Endothelial cell of umbilical vein (primary cell): ENCODE measurements at regions of chr12 and their contacts with region 1.

Region 1: DNA sequence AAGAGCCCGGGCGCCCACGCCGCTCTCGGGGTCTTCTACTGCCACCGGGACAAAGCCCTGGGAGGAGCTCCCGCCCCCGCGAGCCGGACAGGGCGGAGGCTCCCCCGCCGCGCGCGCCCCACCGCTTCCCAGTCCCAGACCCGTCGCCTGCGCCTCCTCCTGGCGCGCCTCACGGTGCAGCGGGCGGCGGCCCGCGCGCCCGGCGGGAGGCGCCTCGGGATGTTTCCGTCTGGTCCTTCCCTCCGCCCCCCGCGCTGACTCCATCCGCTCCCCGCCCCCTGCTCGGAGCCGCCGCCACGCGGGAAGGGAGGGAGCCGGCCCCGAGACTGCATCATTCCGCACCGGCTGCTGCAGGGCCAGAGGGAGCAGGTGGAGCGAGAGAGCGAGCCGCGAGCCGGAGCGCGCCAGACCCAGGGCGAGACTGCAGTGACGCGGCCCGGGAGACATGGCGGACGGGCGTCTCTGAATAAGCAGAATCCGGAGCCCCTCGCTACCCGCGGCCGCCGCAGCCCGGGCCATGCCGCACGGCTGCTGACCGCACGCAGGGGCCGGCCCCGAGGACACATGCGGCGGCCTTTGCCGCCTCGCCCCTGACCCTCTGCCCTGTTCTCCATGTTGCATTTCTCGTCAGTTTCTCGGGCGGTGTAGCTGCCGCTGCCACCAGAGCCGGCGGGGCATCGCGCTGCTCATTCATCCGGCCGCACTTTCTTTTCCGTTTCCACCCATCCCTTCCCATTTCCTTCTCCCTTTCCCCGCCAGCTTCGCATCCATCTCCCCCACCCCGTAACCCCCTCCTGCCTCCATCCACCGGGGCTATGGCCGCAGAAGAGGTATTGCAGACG is at the start of gene BICD1:
- DNase-seq: peak; percentile 92
- H3K4me3 ChIP-seq: peak within 1 kb of the TSS; percentile 58 to 84 (median 67)
- H3K27ac ChIP-seq: peak within 1 kb of the TSS; percentile 69
- H3K4me1 ChIP-seq: peaks cover 14% of the 10 kb centered on the region
- H3K27me3 ChIP-seq: no peaks in the 10 kb centered on the region
- CTCF ChIP-seq: peak; percentile 20 to 40
- POLR2A ChIP-seq: peak; percentile 76
- total RNA-seq, gene BICD1: 45.8 and 51.0 TPM in 2 replicates

Region 2: DNA sequence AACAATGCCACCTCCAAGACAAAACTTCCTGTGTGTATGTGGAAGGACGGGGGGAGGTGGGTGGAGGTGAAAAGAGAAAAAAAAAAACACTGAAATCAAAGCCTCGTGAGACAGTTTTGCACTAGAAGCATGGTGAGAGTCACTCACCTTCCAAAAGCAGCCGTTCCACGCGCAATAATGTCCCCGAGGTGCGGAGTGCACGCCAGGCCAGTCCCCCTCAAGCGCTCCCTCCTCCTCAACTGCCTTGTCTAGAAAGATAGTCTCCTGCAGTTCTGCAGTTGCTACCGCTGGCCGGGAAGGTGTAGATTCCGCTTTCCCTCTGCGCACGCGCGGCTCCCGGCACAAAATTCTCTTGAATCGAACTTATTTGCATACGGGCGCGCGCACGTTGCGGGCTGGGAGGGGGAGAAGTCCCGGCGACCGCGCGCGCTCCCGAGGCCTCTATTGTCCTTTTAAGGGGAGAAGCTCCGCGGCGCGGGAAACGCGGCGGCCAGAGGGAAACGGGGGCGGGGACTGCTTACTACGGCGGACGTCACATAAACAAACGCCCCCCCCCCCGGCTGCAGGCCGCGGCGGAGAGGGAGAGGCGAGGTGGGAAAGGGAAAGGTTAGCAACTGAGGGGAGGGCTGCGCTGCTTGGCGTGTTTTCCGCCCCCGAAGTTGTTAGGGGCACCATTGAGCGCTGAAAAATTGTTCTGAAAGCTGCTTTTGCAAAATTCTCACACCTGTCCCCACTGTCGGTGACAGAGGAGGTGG is 780.7 kb before region 1 on chr12 and contains the start of gene SINHCAF:
- CTCF ChIA-PET with region 1: no interaction called
- POLR2A ChIA-PET with region 1: no interaction called
- dilution Hi-C with region 1: no loop called
- intact Hi-C with region 1: loop called (anchors 10 kb)
- DNase-seq: peak; percentile 99
- H3K4me3 ChIP-seq: peak within 1 kb of the TSS; percentile 53 to 98 (median 97)
- H3K27ac ChIP-seq: peak within 1 kb of the TSS; percentile 88
- H3K4me1 ChIP-seq: peaks cover 25% of the 10 kb centered on the region
- H3K27me3 ChIP-seq: peaks cover 0 to 12% of the 10 kb centered on the region in 2 experiments
- CTCF ChIP-seq: no peak
- POLR2A ChIP-seq: peak; percentile 97
- total RNA-seq, gene SINHCAF: 73.5 and 83.4 TPM in 2 replicates

Region 3: GRCh38 chr12:31682136-31682962 is 424.4 kb before region 1 on chr12:
- CTCF ChIA-PET with region 1: interaction called, 3 read pairs
- POLR2A ChIA-PET with region 1: no interaction called
- dilution Hi-C with region 1: no loop called
- intact Hi-C with region 1: loop called (anchors 5 kb)
- DNase-seq: peak; percentile 87
- H3K4me3 ChIP-seq: no peak overlapping the region
- H3K27ac ChIP-seq: no peak overlapping the region
- H3K4me1 ChIP-seq: no peaks in the 10 kb centered on the region
- H3K27me3 ChIP-seq: no peaks in the 10 kb centered on the region
- CTCF ChIP-seq: peak; percentile 69 to 71
- POLR2A ChIP-seq: no peak

Region 4: GRCh38 chr12:31959161-31959700 is 147.5 kb before region 1 on chr12 and contains the start of gene RESF1:
- CTCF ChIA-PET with region 1: no interaction called
- POLR2A ChIA-PET with region 1: no interaction called
- dilution Hi-C with region 1: no loop called
- intact Hi-C with region 1: loop called (anchors 2 kb)
- DNase-seq: peak; percentile 88
- H3K4me3 ChIP-seq: peak within 1 kb of the TSS; percentile 72 to 98 (median 88)
- H3K27ac ChIP-seq: peak within 1 kb of the TSS; percentile 74
- H3K4me1 ChIP-seq: peaks cover 21% of the 10 kb centered on the region
- H3K27me3 ChIP-seq: no peaks in the 10 kb centered on the region
- CTCF ChIP-seq: no peak
- POLR2A ChIP-seq: peak; percentile 90
- total RNA-seq, gene RESF1: 62.1 and 70.0 TPM in 2 replicates

Region 5: GRCh38 chr12:32069071-32069470 is 37.7 kb before region 1 on chr12:
- CTCF ChIA-PET with region 1: interaction called, 11 read pairs
- POLR2A ChIA-PET with region 1: no interaction called
- dilution Hi-C with region 1: no loop called
- intact Hi-C with region 1: loop called (anchors 2 kb)
- DNase-seq: peak; percentile 83
- H3K4me3 ChIP-seq: no peak overlapping the region
- H3K27ac ChIP-seq: no peak overlapping the region
- H3K4me1 ChIP-seq: peaks cover 12% of the 10 kb centered on the region
- H3K27me3 ChIP-seq: peaks cover 0 to 2% of the 10 kb centered on the region in 2 experiments
- CTCF ChIP-seq: no peak
- POLR2A ChIP-seq: no peak

Region 6: DNA sequence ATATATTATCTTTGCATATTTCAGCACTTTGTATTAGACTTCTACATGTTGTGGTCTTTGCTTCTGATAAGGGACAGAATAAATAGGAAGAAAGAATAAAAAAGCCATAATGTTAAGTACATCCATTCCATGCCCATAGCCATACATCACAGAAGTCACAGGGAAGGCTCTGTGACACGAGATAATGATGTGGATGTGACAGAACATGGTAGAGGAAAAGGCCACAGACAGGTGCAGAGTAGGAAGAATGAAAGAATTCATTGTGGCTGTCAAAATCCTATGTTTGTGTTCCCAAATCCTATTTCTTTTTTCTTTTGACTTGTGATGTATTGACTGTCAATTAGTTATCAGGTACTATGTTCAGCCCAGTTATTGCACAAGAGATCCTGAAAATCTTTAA is 38.4 kb after region 1 on chr12:
- CTCF ChIA-PET with region 1: no interaction called
- POLR2A ChIA-PET with region 1: no interaction called
- dilution Hi-C with region 1: no loop called
- intact Hi-C with region 1: no loop called
- DNase-seq: no peak
- H3K4me3 ChIP-seq: no peak overlapping the region
- H3K27ac ChIP-seq: no peak overlapping the region
- H3K4me1 ChIP-seq: no peaks in the 10 kb centered on the region
- H3K27me3 ChIP-seq: no peaks in the 10 kb centered on the region
- CTCF ChIP-seq: no peak
- POLR2A ChIP-seq: no peak

Region 7: DNA sequence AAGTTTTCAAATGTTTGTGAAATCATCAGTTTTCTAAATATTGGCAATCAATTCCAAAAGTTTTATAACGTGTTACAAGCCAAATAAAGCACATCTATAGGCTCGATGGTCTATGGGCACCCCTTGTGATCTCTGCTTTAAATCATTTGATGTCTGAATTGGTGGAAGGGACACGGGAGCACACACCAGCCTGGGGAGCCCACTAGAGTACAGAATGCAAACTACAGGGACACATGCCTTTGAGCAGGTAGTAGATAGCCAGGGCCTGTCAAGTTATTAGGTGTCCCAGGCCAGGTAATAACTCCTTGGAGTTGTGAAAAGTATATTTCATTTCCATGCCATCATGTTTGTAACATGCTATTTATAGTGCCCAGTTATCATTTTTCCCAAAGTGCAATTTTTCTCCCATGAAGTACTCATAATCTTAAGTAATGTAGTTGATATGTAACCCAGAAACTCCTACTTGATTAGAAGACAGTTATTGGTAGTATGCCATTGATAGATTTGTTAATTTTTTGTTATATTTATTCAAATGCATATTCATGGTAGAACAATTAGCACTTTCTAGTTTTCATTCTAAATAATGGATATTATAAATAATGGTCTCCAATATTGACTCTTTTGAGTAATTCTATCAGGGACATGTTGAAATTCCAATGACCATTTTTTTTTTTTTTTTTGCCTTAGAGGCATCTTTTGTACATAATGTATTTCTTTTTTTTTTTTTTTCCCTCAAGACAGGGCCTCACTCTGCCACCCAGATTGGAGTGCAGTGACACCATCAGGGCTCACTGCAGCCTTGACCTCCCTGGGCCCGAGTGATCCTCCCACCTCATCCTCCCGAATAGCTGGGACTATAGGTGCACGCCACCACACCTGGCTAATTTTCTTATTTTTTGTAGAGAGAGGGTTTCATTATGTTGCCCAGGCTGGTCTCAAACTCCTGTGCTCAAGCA is 195.8 kb after region 1 on chr12:
- CTCF ChIA-PET with region 1: interaction called, 6 read pairs
- POLR2A ChIA-PET with region 1: no interaction called
- dilution Hi-C with region 1: no loop called
- intact Hi-C with region 1: loop called (anchors 2 kb)
- DNase-seq: peak; percentile 56
- H3K4me3 ChIP-seq: no peak overlapping the region
- H3K27ac ChIP-seq: no peak overlapping the region
- H3K4me1 ChIP-seq: no peaks in the 10 kb centered on the region
- H3K27me3 ChIP-seq: no peaks in the 10 kb centered on the region
- CTCF ChIP-seq: peak; percentile 58 to 61
- POLR2A ChIP-seq: no peak